ENCODE measurements at regions of chr1 and their contacts with region 1.

Region 1: DNA sequence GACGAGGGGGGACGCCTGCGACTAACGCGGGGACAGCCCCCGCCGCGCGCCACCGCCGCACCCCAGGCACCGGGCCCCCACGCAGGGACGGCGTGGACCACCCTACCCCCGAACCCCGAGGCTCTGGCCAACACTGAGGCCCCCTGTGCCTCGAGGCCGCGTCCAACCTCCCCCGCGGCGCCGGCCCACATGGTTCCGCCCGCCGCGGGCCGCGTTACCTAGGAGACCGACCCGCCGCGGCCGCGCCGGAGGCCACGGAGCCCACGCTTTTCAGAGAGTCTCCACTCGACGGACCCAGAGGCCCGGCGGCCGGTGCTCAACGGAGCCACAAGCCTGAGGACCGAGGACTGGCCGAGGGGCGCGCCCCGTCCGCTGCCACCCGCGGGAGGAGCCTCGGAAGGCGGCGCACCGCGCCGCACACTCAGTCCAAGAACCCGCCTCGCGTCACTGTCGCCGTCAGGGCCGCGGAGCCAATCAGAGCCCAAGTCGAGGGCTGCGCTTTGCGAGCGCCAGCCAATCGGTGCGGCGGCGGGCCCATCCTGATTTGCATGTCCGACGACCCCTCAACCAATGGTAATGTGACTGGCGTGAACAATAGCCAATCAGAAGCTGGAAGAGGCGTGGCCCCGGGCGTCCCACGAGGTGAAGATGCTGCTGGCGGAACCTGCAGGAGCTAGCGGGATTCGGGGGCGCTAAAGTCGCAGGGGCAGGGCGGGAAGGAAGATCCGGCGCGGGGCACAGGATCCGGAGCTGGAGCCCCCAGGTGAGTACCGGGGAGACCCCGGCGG is at the start of gene NPHP4:
- DNase-seq: peak; percentile 100
- ATAC-seq: peak; percentile 98
- H3K4me3 ChIP-seq: peak within 1 kb of the TSS; percentile 72 to 80
- H3K27ac ChIP-seq: peak within 1 kb of the TSS in 1 of 2 donors; percentile 69
- H3K4me1 ChIP-seq: no peaks in the 10 kb centered on the region
- H3K27me3 ChIP-seq: no peaks in the 10 kb centered on the region
- total RNA-seq, gene NPHP4: 7.8 to 15.1 TPM

Region 2: DNA sequence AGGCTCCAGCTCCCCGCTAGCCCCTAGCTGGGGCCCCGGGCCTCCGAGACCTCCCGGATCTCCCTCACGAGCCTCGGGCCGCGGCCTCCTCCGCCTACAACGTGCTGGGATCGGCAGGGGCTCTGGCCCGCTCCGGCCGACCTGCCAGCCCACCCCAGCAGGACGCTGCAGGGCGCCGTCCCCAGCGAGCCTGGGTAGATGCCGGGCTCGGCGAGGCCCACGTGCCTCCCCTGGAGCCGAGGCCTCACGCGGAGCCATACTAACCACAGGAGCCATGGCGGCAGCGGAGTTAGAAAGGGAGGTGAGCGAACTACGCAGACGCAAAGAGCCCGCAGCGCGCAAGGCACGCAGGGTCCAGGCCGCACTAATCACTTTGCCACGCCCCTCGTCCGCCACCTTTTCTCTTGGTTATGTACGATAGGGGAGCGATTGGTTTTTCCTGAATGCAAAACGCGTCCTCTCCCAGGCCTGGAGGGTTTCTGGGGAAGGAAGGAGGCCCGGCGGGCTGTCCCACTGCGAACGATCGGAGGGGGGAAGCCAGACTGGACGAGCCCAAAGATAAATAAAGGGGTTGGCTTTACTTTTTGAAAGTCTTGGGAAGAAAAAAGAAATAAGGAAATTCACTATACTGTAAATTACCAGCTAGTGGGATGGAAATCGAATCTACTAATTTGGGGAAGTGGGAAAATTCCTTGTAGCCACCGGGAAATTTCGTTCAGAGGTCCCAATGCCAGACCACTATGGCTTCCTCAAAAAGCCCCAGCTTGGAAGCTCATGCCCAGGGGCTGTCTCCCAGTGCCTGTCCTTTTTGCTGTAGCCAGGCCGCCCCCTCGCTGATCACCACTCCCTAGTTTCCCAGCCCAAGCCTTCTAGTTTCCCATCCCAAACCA is 207.3 kb after region 1 on chr1 and contains the start of gene RPL22:
- intact Hi-C with region 1: loop called in 1 of 2 experiments (anchors 10 kb)
- DNase-seq: peak; percentile 99
- ATAC-seq: peak; percentile 99
- H3K4me3 ChIP-seq: peak within 1 kb of the TSS; percentile 61 to 85
- H3K27ac ChIP-seq: peak within 1 kb of the TSS in 1 of 2 donors; percentile 61
- H3K4me1 ChIP-seq: no peaks in the 10 kb centered on the region
- H3K27me3 ChIP-seq: no peaks in the 10 kb centered on the region
- total RNA-seq, gene RPL22: 309 to 335 TPM

Measured in aorta (tissue), 5 donors.